Activated CD4-positive, alpha-beta memory T cell treated with anti-CD3 and anti-CD28 coated beads, Interleukin-2, amount 10 ng/mL, durations not matched to agents 7 days and 5 days (primary cell): ENCODE measurements at regions of chr6 and their contacts with region 1.

Region 1: GRCh38 chr6:25017932-25018567 is 82.3 kb upstream of the RIPOR2 start:
- DNase-seq: peak; percentile 88
- H3K4me3 Mint-ChIP-seq: no peak overlapping the region
- H3K27ac Mint-ChIP-seq: peak overlapping the region; percentile 46
- H3K4me1 Mint-ChIP-seq: peaks cover 45% of the 10 kb centered on the region
- H3K27me3 Mint-ChIP-seq: no peaks in the 10 kb centered on the region

Region 2: GRCh38 chr6:24831771-24832716 is 186.0 kb before region 1 on chr6:
- CTCF ChIA-PET with region 1: interaction called, 13 read pairs
- POLR2A ChIA-PET with region 1: no interaction called
- DNase-seq: no peak
- H3K4me3 Mint-ChIP-seq: no peak overlapping the region
- H3K27ac Mint-ChIP-seq: no peak overlapping the region
- H3K4me1 Mint-ChIP-seq: peaks cover 26% of the 10 kb centered on the region
- H3K27me3 Mint-ChIP-seq: no peaks in the 10 kb centered on the region

Region 3: DNA sequence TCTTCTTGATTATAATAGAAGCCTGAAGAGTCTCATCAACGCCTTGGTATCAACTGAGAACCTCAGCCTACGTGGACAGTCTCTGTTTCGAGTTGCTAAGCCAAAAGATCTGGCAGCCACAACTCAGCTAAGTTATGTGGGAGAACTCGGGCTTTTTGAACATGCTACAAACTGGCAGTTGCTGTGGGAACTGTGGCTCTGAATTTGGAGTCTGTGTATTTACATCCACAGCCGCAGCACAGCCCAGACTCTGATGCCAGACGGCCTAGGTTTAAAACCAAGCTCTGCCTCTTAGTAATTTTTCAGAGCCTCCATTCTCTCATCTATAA is 118.1 kb before region 1 on chr6:
- CTCF ChIA-PET with region 1: interaction called, 15 read pairs
- POLR2A ChIA-PET with region 1: interaction called, 6 read pairs
- DNase-seq: peak; percentile 21
- H3K4me3 Mint-ChIP-seq: no peak overlapping the region
- H3K27ac Mint-ChIP-seq: peak overlapping the region; percentile 62
- H3K4me1 Mint-ChIP-seq: peaks cover 66% of the 10 kb centered on the region
- H3K27me3 Mint-ChIP-seq: no peaks in the 10 kb centered on the region

Region 4: GRCh38 chr6:24924580-24925356 is 93.3 kb before region 1 on chr6:
- CTCF ChIA-PET with region 1: interaction called, 10 read pairs
- POLR2A ChIA-PET with region 1: interaction called, 4 read pairs
- DNase-seq: no peak
- H3K4me3 Mint-ChIP-seq: peak overlapping the region; percentile 26
- H3K27ac Mint-ChIP-seq: peak overlapping the region; percentile 57
- H3K4me1 Mint-ChIP-seq: peaks cover 87% of the 10 kb centered on the region
- H3K27me3 Mint-ChIP-seq: peaks cover 3% of the 10 kb centered on the region

Region 5: GRCh38 chr6:24980507-24981387 is 37.3 kb before region 1 on chr6:
- CTCF ChIA-PET with region 1: no interaction called
- POLR2A ChIA-PET with region 1: no interaction called
- DNase-seq: no peak
- H3K4me3 Mint-ChIP-seq: no peak overlapping the region
- H3K27ac Mint-ChIP-seq: no peak overlapping the region
- H3K4me1 Mint-ChIP-seq: peaks cover 24% of the 10 kb centered on the region
- H3K27me3 Mint-ChIP-seq: no peaks in the 10 kb centered on the region

Region 6: DNA sequence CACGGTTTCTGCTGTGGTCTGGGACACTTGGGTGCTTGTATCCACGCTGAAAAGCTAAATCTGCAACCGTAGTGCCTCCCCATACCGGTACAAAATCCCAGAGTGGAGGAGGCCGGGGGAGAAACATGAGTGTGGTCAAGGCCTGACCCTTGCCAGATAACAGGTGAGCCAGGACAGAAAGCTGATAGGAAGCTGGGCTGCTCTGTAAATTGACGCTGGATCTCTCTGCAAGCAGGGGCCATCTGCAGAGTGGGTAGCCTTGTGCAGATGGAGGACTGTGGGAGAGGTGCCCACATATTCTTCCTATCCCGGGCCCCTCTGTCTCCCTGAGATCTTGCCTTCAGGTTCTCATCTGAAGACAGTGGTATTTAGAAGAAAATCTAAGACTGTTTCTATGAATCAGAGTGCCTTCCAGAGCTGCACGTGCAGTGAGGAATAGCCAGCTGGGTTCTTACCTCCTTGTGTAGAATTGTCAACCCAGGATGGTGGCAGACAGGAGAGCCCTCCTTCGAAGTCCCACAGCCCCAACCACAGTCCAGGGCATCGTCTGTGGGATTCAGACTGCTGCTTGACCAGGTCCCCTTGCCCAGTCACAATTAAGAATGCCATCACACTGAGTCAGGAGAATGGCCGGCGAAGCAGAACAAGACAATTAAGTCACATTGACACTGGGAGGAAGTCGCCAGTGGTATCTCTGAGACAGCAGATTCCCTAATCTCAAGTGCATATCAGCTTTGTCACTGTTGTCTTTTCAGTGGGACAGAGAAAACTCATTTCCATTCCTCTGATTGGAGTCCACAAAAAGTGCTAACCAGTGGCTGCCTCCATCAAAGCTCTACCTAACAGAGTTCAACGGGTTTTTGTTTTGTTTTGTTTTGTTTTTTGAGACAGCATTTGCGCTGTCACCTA is 17.7 kb after region 1 on chr6:
- CTCF ChIA-PET with region 1: interaction called, 10 read pairs
- POLR2A ChIA-PET with region 1: interaction called, 4 read pairs
- DNase-seq: peak; percentile 45
- H3K4me3 Mint-ChIP-seq: peak overlapping the region; percentile 95
- H3K27ac Mint-ChIP-seq: peak overlapping the region; percentile 95
- H3K4me1 Mint-ChIP-seq: peaks cover 69% of the 10 kb centered on the region
- H3K27me3 Mint-ChIP-seq: no peaks in the 10 kb centered on the region

Region 7: GRCh38 chr6:25070547-25071366 is 52.7 kb after region 1 on chr6:
- CTCF ChIA-PET with region 1: interaction called, 51 read pairs
- POLR2A ChIA-PET with region 1: interaction called, 3 read pairs
- DNase-seq: peak; percentile 87
- H3K4me3 Mint-ChIP-seq: no peak overlapping the region
- H3K27ac Mint-ChIP-seq: peak overlapping the region; percentile 81
- H3K4me1 Mint-ChIP-seq: peaks cover 8% of the 10 kb centered on the region
- H3K27me3 Mint-ChIP-seq: peaks cover 2% of the 10 kb centered on the region

Region 8: GRCh38 chr6:25397406-25397805 is 379.4 kb after region 1 on chr6:
- CTCF ChIA-PET with region 1: no interaction called
- POLR2A ChIA-PET with region 1: no interaction called
- DNase-seq: no peak
- H3K4me3 Mint-ChIP-seq: no peak overlapping the region
- H3K27ac Mint-ChIP-seq: no peak overlapping the region
- H3K4me1 Mint-ChIP-seq: no peaks in the 10 kb centered on the region
- H3K27me3 Mint-ChIP-seq: no peaks in the 10 kb centered on the region

Region 9: DNA sequence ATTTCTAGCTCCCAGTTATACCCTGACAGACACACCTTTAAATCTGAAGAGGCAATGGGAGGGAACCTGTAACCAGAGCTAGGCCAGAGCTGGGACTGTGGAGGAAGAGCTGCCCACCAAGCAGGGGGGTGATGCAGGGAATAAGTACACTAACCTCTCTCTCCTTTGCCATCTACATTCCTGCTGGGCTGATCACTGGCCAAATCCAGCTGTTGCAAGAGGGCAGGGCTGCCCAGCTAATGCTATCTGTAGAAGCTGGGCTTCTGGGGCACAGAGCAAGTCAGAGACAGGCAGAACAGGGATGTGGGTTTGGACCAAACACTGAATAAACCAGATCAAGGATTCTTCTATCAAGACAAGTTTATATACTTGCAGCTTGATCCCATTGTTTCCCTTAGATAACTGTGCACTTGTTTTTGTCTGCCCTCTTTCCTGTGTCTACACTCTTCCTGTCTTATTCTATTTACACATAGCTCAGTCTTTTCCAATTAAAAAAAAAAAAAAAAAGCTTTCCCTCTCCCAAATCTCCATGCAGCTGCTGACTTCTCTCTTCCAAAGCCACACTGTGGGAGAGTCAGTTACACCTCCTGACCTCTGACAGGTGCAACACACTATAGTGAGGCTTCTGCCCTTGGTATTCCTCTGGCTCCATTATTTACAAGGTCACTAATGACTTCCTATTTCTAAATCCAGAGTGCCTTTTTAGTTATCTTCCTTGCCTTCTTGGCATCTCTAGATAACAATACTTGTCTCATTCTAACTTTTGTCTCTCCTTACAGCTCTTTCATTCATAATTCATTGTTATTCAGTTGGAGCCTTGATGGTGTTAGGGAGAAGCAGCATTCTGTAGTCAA is 988.3 kb after region 1 on chr6:
- CTCF ChIA-PET with region 1: no interaction called
- POLR2A ChIA-PET with region 1: no interaction called
- DNase-seq: no peak
- H3K4me3 Mint-ChIP-seq: no peak overlapping the region
- H3K27ac Mint-ChIP-seq: no peak overlapping the region
- H3K4me1 Mint-ChIP-seq: peaks cover 6% of the 10 kb centered on the region
- H3K27me3 Mint-ChIP-seq: no peaks in the 10 kb centered on the region